ENCODE measurements at regions of chr3 and their contacts with region 1.

Region 1: DNA sequence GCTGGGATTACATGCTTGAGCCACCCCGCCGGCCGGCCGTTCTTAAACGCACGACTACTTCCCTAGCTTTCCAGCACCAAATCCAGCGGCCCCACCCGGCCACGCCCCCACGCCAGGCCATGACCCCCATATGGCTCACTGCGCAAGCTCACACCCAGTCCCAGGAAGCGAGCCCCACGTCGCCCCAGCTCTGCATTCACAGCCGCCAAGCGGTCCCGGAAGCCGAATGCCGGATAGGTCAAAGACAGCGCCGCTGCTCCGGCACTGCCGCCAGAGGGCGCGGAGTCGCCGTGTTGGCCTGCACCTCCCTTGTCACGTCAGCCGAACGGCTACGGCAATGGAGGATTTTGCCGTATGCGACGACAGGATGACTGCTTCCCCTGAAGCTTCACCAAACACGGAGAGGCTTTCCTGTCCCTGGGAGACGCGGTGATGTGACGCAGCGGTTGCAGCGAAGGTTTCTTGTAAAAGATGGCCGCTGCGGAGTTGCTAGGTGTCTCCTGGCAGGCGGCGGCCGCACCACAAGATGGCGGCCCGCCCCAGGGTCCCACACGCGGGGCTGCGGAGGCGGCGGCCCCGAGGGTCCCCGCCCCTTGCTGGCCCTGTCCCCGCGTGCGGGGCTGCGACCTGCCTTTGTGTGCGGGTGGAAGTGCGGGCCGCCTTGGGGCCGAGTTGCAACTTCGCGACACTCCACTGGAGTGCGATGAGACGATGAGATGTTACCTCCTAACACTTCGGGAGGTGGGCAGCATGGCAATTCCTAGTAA is 30.2 kb upstream of the RPN1 start:
- DNase-seq: peak; percentile 87
- ATAC-seq: peak; percentile 98
- H3K4me3 Mint-ChIP-seq: peak overlapping the region; percentile 89
- H3K27ac Mint-ChIP-seq: peak overlapping the region; percentile 92
- H3K4me1 Mint-ChIP-seq: peaks cover 6% of the 10 kb centered on the region
- H3K27me3 Mint-ChIP-seq: peaks cover 2% of the 10 kb centered on the region

Region 2: GRCh38 chr3:128503164-128503651 is 177.6 kb before region 1 on chr3:
- POLR2A ChIA-PET with region 1: no interaction called
- DNase-seq: no peak
- ATAC-seq: no peak
- H3K4me3 Mint-ChIP-seq: no peak overlapping the region
- H3K27ac Mint-ChIP-seq: no peak overlapping the region
- H3K4me1 Mint-ChIP-seq: no peaks in the 10 kb centered on the region
- H3K27me3 Mint-ChIP-seq: peaks cover 48% of the 10 kb centered on the region

Region 3: GRCh38 chr3:128745742-128746141 is 65.0 kb after region 1 on chr3:
- POLR2A ChIA-PET with region 1: no interaction called
- DNase-seq: no peak
- ATAC-seq: no peak
- H3K4me3 Mint-ChIP-seq: no peak overlapping the region
- H3K27ac Mint-ChIP-seq: no peak overlapping the region
- H3K4me1 Mint-ChIP-seq: peaks cover 10% of the 10 kb centered on the region
- H3K27me3 Mint-ChIP-seq: no peaks in the 10 kb centered on the region

Region 4: GRCh38 chr3:128787256-128788240 is 106.8 kb after region 1 on chr3:
- POLR2A ChIA-PET with region 1: interaction called, 11 read pairs
- DNase-seq: no peak
- ATAC-seq: peak; percentile 57
- H3K4me3 Mint-ChIP-seq: peak overlapping the region; percentile 92
- H3K27ac Mint-ChIP-seq: peak overlapping the region; percentile 99
- H3K4me1 Mint-ChIP-seq: peaks cover 68% of the 10 kb centered on the region
- H3K27me3 Mint-ChIP-seq: no peaks in the 10 kb centered on the region

Region 5: DNA sequence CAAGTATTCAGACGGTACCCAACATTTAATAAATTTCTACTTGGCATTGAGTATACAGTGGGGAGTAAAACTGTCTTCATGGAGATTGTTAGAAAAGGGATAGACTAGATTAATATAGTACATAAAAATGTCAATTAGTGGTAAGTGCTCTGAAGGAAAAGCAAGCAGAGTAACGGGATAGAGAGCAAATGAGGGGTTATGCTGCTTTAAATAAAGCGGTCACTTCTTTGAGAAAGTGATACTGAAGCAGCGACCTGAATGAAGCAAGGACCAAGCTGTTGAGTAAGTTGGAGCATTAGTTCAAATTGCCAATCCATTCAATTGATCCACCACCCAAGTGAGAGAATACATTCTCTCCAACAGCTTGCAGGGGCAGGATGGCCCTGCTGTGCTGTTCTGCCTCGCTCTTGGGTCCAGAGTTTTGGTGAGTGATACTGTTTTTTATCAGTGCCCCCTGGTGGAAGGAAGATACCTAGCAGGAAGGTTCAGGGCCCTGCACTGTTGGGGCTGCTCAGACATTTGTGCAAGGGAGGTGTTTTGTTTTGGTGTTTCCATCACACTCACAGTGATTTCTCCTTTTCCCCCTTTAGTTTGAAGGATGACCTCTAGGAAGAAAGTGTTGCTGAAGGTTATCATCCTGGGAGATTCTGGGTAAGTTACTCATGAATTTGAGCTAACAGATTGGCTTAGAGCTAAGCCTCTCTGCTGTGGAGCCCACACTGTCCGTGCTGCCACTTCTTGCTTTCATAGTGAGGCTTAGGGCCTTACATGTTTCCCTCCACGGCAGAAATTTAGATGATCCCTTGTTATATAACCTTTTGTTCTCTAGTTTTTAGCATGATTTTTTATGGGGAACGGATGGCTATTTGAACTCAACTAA is 114.2 kb after region 1 on chr3:
- POLR2A ChIA-PET with region 1: interaction called, 14 read pairs
- DNase-seq: no peak
- ATAC-seq: peak; percentile 90
- H3K4me3 Mint-ChIP-seq: peak overlapping the region; percentile 44
- H3K27ac Mint-ChIP-seq: peak overlapping the region; percentile 84
- H3K4me1 Mint-ChIP-seq: peaks cover 61% of the 10 kb centered on the region
- H3K27me3 Mint-ChIP-seq: no peaks in the 10 kb centered on the region

Region 6: DNA sequence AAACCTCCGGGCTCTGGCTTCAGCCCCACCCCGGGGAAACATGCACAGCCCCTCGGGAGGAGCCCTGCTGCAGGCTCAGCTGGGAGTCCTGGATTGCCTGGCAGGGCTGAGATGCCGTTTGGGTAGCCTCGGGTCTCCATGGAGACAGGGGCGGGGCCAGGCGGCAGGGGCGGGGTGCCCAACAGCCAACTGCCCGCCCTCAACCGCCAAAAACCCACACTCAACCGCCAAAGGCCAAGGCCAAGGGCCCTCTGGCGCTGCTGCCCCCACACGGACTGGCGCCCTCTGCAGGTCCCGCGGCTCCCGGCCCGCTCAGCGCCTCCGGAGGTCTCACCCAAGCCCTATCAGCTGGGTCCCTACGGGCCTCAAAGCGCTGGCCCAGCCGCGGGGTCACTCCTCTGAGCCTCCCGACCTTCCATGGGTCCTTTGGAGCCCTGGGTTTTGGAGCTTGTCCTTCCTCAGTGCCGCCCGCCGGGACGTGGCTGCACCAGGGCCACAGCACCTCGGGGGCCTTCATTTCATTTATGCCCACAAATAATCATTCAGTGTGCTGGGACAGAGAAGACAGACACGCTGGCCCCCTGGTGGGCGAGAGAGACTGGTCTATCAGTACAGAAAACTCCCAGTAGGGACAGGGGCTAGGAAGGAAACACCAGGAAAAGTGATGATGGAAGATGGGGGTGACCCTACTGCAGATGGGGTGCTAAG is 165.1 kb after region 1 on chr3:
- POLR2A ChIA-PET with region 1: interaction called, 11 read pairs
- DNase-seq: peak; percentile 85
- ATAC-seq: peak; percentile 80
- H3K4me3 Mint-ChIP-seq: peak overlapping the region; percentile 80
- H3K27ac Mint-ChIP-seq: peak overlapping the region; percentile 89
- H3K4me1 Mint-ChIP-seq: peaks cover 10% of the 10 kb centered on the region
- H3K27me3 Mint-ChIP-seq: no peaks in the 10 kb centered on the region